ENCODE measurements at regions of chr7 and their contacts with region 1.

Region 1: DNA sequence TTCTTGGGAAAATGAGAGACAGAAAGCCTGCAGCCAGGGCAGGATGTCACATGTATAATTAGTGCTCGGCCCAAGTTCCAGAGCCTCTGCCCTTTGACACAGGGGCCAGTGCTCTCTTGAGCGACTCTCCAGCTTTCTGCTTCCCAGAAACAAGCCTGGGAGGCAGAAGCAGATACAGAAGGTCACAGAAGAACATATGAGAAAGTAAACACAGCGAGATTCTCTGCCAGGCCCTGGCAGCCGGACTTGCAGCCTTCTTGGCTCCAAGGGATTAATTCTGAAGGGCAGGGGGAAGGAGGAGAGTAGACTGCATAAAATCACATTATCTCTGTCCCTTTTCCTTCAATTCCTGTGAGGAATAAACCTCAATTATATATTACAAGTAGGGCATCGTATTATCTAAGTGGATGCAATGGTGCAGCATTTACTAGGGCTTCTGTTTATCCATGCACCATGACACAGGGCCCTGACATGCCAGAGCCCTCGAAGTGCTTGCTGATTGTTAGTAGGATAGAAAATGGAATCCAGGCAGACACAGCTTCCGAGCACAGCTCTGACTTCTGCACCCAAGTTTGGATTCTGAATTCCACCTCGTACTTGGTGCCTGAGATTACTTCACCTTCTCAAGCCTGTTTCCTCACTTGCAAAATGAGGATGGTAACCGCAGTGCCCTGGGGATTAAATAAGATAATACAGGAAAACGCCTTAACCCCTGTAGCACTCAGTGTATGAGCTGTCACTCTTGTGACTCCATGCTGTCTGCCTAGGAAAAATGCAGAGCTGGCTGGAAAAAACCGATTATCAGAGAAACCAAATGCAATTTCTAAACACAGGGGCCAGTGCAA is 536.5 kb downstream of the TNS3 start:
- DNase-seq: peak; percentile 21
- H3K4me3 ChIP-seq: no peak overlapping the region
- H3K27ac ChIP-seq: no peak overlapping the region
- H3K4me1 ChIP-seq: no peaks in the 10 kb centered on the region
- H3K27me3 ChIP-seq: no peaks in the 10 kb centered on the region
- CTCF ChIP-seq: no peak
- POLR2A ChIP-seq: no peak

Region 2: GRCh38 chr7:46932676-46933424 is 112.6 kb before region 1 on chr7:
- intact Hi-C with region 1: loop called (anchors 10 kb)
- DNase-seq: peak; percentile 84
- H3K4me3 ChIP-seq: no peak overlapping the region
- H3K27ac ChIP-seq: peak overlapping the region; percentile 5 to 17
- H3K4me1 ChIP-seq: no peaks in the 10 kb centered on the region
- H3K27me3 ChIP-seq: no peaks in the 10 kb centered on the region
- CTCF ChIP-seq: no peak
- POLR2A ChIP-seq: no peak

Region 3: DNA sequence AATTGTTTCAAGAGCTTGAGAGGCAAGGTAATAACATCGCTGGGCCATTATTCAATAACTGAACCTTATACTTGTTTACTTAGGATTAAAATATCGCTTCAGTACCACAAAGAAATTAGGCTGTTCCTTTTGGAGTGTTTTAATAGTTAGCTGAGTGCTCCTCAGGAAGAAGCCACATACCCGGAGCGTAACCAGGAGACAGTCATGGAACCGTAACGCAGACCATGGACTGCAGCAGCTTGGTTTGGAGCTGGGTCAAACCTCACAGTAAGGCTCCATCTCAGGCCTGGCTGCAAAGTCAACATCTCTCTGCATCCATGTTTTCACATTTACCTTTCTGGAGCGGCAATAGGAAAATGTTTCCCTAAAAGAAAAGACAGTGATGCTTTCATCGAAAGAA is 62.5 kb before region 1 on chr7:
- intact Hi-C with region 1: no loop called
- DNase-seq: no peak
- H3K4me3 ChIP-seq: no peak overlapping the region
- H3K27ac ChIP-seq: no peak overlapping the region
- H3K4me1 ChIP-seq: no peaks in the 10 kb centered on the region
- H3K27me3 ChIP-seq: no peaks in the 10 kb centered on the region
- CTCF ChIP-seq: no peak
- POLR2A ChIP-seq: no peak

Region 4: GRCh38 chr7:47497367-47498096 is 452.1 kb after region 1 on chr7:
- intact Hi-C with region 1: no loop called
- DNase-seq: no peak
- H3K4me3 ChIP-seq: no peak overlapping the region
- H3K27ac ChIP-seq: no peak overlapping the region
- H3K4me1 ChIP-seq: no peaks in the 10 kb centered on the region
- H3K27me3 ChIP-seq: no peaks in the 10 kb centered on the region
- CTCF ChIP-seq: no peak
- POLR2A ChIP-seq: no peak